HepG2 (cell line): ENCODE measurements at regions of chr2 and their contacts with region 1.

Region 1: GRCh38 chr2:238305092-238305862 is 15.0 kb upstream of the TRAF3IP1 start:
- DNase-seq: peak; percentile 51
- ATAC-seq: peak; percentile 83
- H3K4me3 ChIP-seq: peak overlapping the region in 1 of 3 experiments; percentile 22; a peak in 1 of 6 replicates
- H3K27ac ChIP-seq: no peak overlapping the region
- H3K4me1 ChIP-seq: peaks cover 33% of the 10 kb centered on the region
- H3K27me3 ChIP-seq: peaks cover 1 to 8% of the 10 kb centered on the region in 2 experiments; a peak in 3 of 5 replicates
- CTCF ChIP-seq: peak; percentile 64
- EP300 ChIP-seq: no peak
- POLR2A ChIP-seq: no peak
- RAD21 ChIP-seq: peak; percentile 53

Region 2: GRCh38 chr2:237841051-237841450 is 464.2 kb before region 1 on chr2:
- CTCF ChIA-PET with region 1: no interaction called
- POLR2A ChIA-PET with region 1: no interaction called
- in situ Hi-C with region 1: no loop called
- intact Hi-C with region 1: no loop called
- DNase-seq: no peak
- ATAC-seq: no peak
- H3K4me3 ChIP-seq: no peak overlapping the region
- H3K27ac ChIP-seq: no peak overlapping the region
- H3K4me1 ChIP-seq: no peaks in the 10 kb centered on the region
- H3K27me3 ChIP-seq: no peaks in the 10 kb centered on the region
- CTCF ChIP-seq: no peak
- EP300 ChIP-seq: no peak
- POLR2A ChIP-seq: no peak
- RAD21 ChIP-seq: no peak

Region 3: DNA sequence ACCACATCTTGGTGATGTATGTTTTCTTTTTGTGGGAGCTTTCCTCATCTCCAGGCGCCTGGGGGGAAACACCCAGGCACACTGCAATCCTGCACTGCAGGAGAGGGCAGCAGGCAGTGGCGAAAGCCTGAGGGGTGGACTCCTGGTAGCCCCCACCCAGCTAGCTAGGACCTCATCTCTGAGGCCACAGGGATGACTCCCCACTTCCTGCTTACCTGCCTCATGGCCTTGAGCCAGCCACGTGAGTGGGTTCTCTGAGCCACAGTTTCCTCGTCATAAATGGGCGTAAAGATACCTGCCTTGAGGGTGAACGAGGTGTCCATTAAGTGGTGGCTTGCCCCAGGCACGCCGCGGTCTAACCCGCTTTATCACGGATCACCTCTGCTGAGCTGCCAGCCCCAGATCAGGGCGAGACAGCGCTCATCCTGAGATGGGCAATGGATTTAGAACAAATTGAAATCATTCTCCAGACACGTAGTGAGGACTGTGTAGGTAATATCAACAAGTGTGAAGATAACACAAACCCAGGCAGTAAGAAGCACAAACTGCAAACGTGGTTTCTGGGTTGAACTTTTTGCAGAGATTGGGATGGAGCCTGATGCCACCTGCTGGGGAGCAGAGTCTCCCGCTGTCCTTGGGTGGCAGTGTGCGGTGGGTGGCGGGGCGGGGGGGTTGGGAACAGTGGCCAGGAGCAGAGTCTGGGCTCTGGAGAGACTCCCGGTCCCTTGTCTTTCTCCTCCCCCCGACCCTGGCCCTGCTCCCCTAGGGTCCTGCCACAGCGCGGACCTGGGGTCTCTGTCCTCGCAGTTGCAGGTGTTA is 34.3 kb after region 1 on chr2:
- CTCF ChIA-PET with region 1: no interaction called
- POLR2A ChIA-PET with region 1: no interaction called
- in situ Hi-C with region 1: no loop called
- intact Hi-C with region 1: loop called (anchors 2 kb)
- DNase-seq: peak; percentile 28
- ATAC-seq: peak; percentile 84
- H3K4me3 ChIP-seq: no peak overlapping the region
- H3K27ac ChIP-seq: no peak overlapping the region
- H3K4me1 ChIP-seq: no peaks in the 10 kb centered on the region
- H3K27me3 ChIP-seq: no peaks in the 10 kb centered on the region
- CTCF ChIP-seq: peak; percentile 56
- EP300 ChIP-seq: no peak
- POLR2A ChIP-seq: no peak
- RAD21 ChIP-seq: no peak